Right ventricle myocardium inferior (tissue), 1 donor: ENCODE measurements at regions of chr2 and their contacts with region 1.

Region 1: DNA sequence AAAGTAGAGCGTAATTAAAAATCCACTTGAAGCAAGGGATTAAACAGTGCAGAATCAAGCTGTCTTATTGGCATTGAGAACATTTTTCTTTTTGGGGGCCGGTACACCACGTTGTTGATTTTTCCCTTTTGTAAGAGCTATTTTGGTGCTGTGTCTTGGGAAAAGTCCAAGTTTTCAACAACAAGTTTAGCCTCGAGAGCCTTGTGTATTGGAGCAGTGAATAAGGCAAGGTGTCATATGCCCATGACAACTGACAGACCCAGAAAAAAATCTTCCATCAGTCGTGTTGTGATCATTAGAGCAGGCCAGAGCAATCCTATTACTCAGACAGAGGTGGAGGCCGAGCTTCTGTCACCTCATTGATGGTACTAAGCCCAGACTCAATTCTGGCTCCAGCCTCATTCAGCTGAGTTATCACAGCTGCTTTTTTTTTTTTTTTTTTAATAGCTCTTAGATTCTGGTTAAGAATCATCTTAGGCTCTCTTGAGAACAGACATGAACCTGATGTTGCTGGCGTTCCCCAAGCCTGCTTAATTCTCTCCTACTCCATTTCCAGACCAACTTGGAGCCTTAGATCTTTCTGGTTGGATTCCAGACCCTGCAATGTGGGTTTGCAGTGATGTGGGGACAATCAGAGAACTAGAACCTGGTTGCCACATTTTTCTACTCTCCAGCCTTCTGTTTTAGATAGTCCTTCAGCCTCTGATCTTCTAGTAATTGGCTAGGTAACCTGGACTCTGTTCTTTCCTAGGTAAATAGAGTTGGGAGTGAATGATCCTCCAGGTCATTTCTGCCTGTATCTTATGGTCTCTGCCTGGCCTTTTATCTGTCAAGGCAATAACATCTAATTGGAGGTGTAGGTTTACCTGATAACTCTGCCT is 43.1 kb downstream of the MOGAT1 start:
- DNase-seq: no peak
- ATAC-seq: peak; percentile 94

Region 2: GRCh38 chr2:222526480-222527277 is 187.9 kb before region 1 on chr2:
- intact Hi-C with region 1: no loop called
- DNase-seq: no peak
- ATAC-seq: no peak

Region 3: DNA sequence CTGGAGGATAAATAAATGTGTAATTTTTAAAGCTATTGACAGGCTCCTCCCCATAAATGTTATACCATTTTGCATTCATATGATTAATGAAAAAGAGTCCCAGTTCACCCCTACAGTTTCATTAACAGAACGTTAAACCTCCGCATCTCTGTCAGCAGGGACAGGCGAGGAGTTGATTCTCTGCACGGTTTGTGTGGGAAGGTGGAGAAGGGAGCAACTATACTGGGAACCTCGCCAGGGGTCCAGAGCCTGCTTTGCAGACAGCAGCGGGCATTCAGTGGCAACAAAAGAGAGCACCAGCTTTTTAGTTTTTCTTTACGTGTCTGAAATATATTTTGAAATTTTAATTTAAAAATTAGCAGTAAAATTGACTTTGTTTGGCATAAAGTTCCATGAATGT is 160.1 kb before region 1 on chr2:
- intact Hi-C with region 1: no loop called
- DNase-seq: no peak
- ATAC-seq: no peak

Region 4: GRCh38 chr2:222753251-222753824 is 38.7 kb after region 1 on chr2:
- intact Hi-C with region 1: loop called (anchors 5 kb)
- DNase-seq: no peak
- ATAC-seq: peak; percentile 96

Region 5: DNA sequence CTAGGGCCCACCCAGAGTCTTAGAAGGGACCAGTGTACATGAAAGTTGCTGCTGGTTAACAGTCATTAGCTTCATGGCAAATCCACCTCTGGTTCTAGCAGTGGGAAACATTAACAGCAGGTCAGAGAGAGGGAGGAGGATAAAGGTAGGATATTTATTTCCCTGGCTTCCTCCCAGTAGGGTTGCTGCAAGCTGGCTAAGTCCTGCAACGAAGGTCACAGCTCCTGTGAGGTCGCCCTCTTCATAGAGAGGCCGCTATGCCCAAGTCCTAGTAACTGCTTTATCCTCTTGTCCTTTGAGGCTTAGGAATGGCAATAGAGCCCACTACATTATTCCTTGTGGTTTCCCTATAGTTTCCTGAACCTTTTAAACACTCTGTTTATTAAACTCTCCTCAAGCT is 62.2 kb after region 1 on chr2:
- intact Hi-C with region 1: loop called (anchors 2 kb)
- DNase-seq: no peak
- ATAC-seq: peak; percentile 84

Region 6: GRCh38 chr2:222819722-222820333 is 105.2 kb after region 1 on chr2:
- intact Hi-C with region 1: no loop called
- DNase-seq: no peak
- ATAC-seq: no peak

Region 7: DNA sequence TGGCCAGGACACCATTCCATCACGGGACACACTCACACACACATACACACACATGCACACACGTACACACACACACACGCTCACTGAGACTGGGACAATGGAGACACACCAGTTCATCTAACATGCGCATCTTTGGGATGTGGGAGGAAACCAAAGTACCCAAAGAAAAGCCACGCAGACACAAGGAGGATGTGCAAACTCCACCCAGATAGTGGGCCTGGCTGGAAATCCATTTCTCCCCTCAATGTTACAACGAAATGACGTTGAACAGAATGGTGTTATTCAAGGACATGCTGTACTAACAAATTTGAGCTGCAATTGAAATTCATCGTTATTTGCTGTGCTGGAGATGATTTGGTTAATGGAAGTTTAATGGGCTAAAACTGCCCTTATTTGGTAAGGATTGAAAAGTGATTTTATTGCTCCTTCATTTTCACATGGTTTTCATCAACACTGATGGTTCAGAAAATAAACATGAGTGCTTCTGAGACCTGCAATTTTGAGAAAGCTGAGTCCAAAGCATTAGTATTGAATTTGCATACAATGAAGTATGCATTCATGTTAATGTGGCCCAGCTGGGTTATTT is 447.4 kb after region 1 on chr2:
- intact Hi-C with region 1: no loop called
- DNase-seq: no peak
- ATAC-seq: no peak